MCF 10A (cell line): ENCODE measurements at regions of chr1 and their contacts with region 1.

Region 1: GRCh38 chr1:209335178-209335577 is 248.3 kb upstream of the CAMK1G start:
- DNase-seq: peak; percentile 75
- H3K4me3 Mint-ChIP-seq: no peak overlapping the region
- H3K27ac Mint-ChIP-seq: no peak overlapping the region
- H3K4me1 Mint-ChIP-seq: peaks cover 5% of the 10 kb centered on the region
- H3K27me3 Mint-ChIP-seq: no peaks in the 10 kb centered on the region
- CTCF ChIP-seq: peak; percentile 96

Region 2: GRCh38 chr1:208132287-208132883 is 1202.8 kb before region 1 on chr1:
- CTCF ChIA-PET with region 1: no interaction called
- POLR2A ChIA-PET with region 1: no interaction called
- intact Hi-C with region 1: no loop called
- DNase-seq: peak; percentile 96
- H3K4me3 Mint-ChIP-seq: peak overlapping the region; percentile 12
- H3K27ac Mint-ChIP-seq: peak overlapping the region; percentile 74
- H3K4me1 Mint-ChIP-seq: peaks cover 31% of the 10 kb centered on the region
- H3K27me3 Mint-ChIP-seq: no peaks in the 10 kb centered on the region
- CTCF ChIP-seq: peak; percentile 99

Region 3: DNA sequence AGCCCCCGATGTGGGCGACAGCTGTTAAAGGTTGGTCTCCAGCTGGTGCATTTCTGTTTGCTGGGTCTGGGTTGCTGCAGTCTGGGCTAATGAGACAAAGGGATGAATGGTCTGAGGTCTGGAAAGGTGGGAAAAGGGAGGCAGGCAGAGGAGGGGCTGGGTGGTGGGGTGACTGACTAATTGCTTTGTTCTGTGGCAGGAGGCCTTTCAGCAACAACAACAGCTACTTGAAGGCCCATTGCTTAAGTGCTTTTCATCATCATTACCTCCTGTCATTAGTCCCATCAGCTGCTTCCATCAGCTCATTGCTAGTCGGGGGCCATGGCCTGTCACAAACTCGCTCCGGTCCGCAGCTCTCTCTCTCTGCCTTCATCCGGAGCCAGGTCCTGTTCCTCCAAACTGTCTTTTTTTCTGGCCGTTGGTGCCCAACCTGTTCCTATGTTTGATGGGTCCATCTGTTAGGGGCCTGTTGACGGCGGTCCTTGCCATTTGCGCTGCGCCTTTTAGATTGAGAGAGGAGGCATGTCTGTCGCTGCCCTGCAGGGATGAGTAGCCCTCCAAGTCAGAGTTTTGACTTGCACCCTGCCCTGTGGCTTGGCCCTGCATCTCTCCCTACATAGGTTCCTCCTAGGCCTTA is 985.4 kb before region 1 on chr1:
- CTCF ChIA-PET with region 1: no interaction called
- POLR2A ChIA-PET with region 1: no interaction called
- intact Hi-C with region 1: loop called (anchors 5 kb)
- DNase-seq: no peak
- H3K4me3 Mint-ChIP-seq: no peak overlapping the region
- H3K27ac Mint-ChIP-seq: no peak overlapping the region
- H3K4me1 Mint-ChIP-seq: no peaks in the 10 kb centered on the region
- H3K27me3 Mint-ChIP-seq: peaks cover 2% of the 10 kb centered on the region
- CTCF ChIP-seq: no peak

Region 4: DNA sequence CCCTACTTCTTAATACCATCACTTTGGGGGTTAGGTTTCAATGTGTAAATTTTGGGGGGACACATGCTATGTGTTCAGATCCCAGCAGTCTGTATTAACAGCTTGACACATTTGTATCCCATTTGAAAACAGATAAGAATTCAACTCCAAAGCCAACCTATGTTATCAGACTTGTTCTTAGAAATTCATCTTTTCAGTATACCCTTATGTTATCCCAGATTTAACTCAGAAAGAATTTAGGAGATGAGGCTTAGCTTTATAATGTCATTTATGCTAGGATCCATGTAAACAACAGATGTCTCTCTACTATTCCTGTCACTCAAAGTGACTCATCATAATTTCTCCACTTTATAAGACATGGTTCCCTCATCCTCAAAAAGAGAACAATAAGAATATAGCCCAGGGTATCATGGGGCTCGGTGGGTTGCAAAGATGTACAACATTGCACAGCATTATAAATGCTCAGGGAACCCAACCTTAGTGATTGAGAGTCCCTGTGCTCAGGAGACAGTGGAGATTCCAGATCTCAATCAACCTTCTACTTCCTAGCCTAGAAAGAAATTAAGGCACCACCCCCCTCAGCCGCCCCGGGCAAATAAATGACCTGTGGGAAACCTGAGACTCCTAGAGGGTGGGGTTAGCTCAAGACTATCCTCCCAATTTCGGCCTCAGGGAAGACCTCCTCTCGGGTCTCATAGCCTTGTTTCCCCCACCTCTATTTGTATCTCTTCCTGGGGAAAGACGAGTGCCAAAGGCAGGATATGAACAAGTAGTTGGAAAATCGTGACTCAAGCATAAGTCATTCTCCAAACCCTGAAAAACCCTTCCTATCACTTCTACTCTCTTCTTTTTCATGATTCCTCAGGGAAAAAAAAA is 16.8 kb before region 1 on chr1:
- CTCF ChIA-PET with region 1: interaction called, 25 read pairs
- POLR2A ChIA-PET with region 1: interaction called, 5 read pairs
- intact Hi-C with region 1: no loop called
- DNase-seq: peak; percentile 66
- H3K4me3 Mint-ChIP-seq: no peak overlapping the region
- H3K27ac Mint-ChIP-seq: no peak overlapping the region
- H3K4me1 Mint-ChIP-seq: peaks cover 16% of the 10 kb centered on the region
- H3K27me3 Mint-ChIP-seq: no peaks in the 10 kb centered on the region
- CTCF ChIP-seq: no peak